B cell (primary cell): ENCODE measurements at regions of chr10 and their contacts with region 1.

Region 1: GRCh38 chr10:96719850-96720421 is 378 bp downstream of the PIK3AP1 start:
- DNase-seq: peak; percentile 88
- ATAC-seq: peak; percentile 63
- H3K4me3 ChIP-seq: peak overlapping the region; percentile 86 to 98 (median 91)
- H3K4me3 Mint-ChIP-seq: peak overlapping the region; percentile 100
- H3K27ac ChIP-seq: peak overlapping the region; percentile 86 to 93
- H3K27ac Mint-ChIP-seq: peak overlapping the region; percentile 99
- H3K4me1 ChIP-seq: peaks cover 49 to 70% of the 10 kb centered on the region in 2 donors
- H3K4me1 Mint-ChIP-seq: peaks cover 70% of the 10 kb centered on the region
- H3K27me3 ChIP-seq: no peaks in the 10 kb centered on the region
- H3K27me3 Mint-ChIP-seq: no peaks in the 10 kb centered on the region
- CTCF ChIP-seq: peak; percentile 77

Region 2: DNA sequence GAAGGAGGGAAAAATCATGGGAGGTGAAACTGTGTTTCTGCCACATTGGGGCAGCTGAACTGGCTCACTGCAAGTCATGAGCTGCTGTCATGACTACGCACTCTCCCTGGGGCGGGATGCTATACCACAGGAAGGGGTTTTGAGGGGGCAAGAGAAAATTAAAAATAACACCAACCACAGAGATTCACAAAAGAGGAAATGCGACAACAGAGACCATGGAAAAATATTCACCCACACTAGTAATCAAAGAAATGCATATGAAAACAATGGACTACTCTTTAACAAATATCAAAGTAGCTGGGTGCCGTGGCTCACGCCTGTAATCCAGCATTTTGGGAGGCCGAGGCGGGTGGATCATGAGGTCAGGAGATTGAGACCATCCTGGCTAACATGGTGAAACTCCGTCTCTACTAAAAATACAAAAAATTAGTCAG is 67.9 kb before region 1 on chr10:
- CTCF ChIA-PET with region 1: interaction called, 22 read pairs
- POLR2A ChIA-PET with region 1: interaction called, 7 read pairs
- intact Hi-C with region 1: loop called (anchors 1 kb)
- DNase-seq: peak; percentile 86
- ATAC-seq: peak; percentile 82
- H3K4me3 ChIP-seq: peak overlapping the region in 1 of 5 experiments; percentile 24
- H3K4me3 Mint-ChIP-seq: peak overlapping the region; percentile 44
- H3K27ac ChIP-seq: peak overlapping the region; percentile 54 to 72
- H3K27ac Mint-ChIP-seq: peak overlapping the region; percentile 86
- H3K4me1 ChIP-seq: peaks cover 49 to 72% of the 10 kb centered on the region in 2 donors
- H3K4me1 Mint-ChIP-seq: peaks cover 79% of the 10 kb centered on the region
- H3K27me3 ChIP-seq: no peaks in the 10 kb centered on the region
- H3K27me3 Mint-ChIP-seq: no peaks in the 10 kb centered on the region
- CTCF ChIP-seq: no peak

Region 3: GRCh38 chr10:96690755-96691731 is 28.9 kb before region 1 on chr10:
- CTCF ChIA-PET with region 1: interaction called, 33 read pairs
- POLR2A ChIA-PET with region 1: interaction called, 4 read pairs
- intact Hi-C with region 1: no loop called
- DNase-seq: no peak
- ATAC-seq: no peak
- H3K4me3 ChIP-seq: no peak overlapping the region
- H3K4me3 Mint-ChIP-seq: peak overlapping the region; percentile 54
- H3K27ac ChIP-seq: peak overlapping the region in 1 of 2 donors; percentile 63
- H3K27ac Mint-ChIP-seq: peak overlapping the region; percentile 88
- H3K4me1 ChIP-seq: peaks cover 86 to 89% of the 10 kb centered on the region in 2 donors
- H3K4me1 Mint-ChIP-seq: peaks cover 90% of the 10 kb centered on the region
- H3K27me3 ChIP-seq: no peaks in the 10 kb centered on the region
- H3K27me3 Mint-ChIP-seq: no peaks in the 10 kb centered on the region
- CTCF ChIP-seq: no peak

Region 4: DNA sequence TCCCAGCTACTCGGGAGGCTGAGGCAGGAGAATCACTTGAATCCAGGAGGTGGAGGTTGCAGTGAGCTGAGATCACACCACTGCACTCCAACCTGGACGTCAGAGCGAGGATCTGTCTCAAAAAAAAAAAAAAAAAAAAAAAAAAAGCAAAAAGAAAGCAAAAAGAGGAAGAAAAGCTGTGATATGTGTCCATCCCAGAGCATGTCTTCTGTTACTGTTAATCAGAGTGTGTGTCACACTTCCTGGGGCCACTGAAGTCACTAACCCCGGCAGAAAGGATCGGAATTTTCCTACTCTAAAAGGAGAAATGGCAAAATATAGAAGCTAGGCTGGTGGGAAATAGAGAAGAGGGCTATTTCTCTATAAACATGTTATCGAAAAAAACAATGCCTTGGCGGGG is 11.5 kb before region 1 on chr10:
- CTCF ChIA-PET with region 1: interaction called, 31 read pairs
- POLR2A ChIA-PET with region 1: interaction called, 7 read pairs
- intact Hi-C with region 1: loop called (anchors 1 kb)
- DNase-seq: peak; percentile 82
- ATAC-seq: peak; percentile 80
- H3K4me3 ChIP-seq: no peak overlapping the region
- H3K4me3 Mint-ChIP-seq: peak overlapping the region; percentile 70
- H3K27ac ChIP-seq: peak overlapping the region; percentile 87 to 92
- H3K27ac Mint-ChIP-seq: peak overlapping the region; percentile 91
- H3K4me1 ChIP-seq: peaks cover 77 to 86% of the 10 kb centered on the region in 2 donors
- H3K4me1 Mint-ChIP-seq: peaks cover 78% of the 10 kb centered on the region
- H3K27me3 ChIP-seq: no peaks in the 10 kb centered on the region
- H3K27me3 Mint-ChIP-seq: no peaks in the 10 kb centered on the region
- CTCF ChIP-seq: no peak

Region 5: DNA sequence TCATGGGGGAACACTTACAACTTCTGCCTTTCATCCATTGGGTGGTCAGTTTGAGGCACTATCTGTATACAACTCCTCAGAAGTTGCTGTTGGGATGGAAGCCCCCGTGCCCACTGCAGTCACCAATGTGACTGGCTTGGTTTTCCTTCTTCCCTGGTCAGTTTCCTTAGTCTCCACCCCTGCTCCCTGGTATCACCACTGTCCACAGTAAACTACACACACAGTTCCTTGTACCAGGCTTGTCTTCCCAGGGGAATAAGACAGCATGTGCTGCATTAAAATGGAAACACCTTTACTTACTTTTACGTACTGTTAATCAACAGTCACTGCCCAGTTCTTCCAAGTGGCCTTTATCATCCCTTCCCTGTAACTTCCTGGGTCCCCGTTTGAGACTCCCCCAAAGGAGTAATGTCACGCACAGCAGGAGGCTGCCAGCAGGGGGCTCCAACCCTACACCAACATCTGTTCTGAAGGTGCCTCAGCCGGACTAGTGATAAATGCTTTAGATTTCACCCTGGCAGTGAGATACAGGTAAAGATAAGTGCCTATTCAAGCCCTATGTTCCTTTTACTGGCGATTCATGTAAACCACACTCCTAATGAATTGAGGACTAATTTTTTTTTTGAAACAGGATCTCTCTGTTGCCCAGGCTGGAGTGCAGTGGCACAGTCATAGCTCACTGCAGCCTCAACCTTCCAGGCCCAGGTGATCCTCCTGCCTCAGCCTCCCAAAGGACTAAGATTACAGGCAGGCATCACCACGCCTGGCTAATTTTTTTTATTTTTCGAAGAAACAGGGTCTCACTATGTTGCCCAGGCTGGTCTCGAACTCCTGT is 45.7 kb after region 1 on chr10:
- CTCF ChIA-PET with region 1: interaction called, 6 read pairs
- POLR2A ChIA-PET with region 1: interaction called, 4 read pairs
- intact Hi-C with region 1: loop called (anchors 1 kb)
- DNase-seq: peak; percentile 83
- ATAC-seq: peak; percentile 74
- H3K4me3 ChIP-seq: no peak overlapping the region
- H3K4me3 Mint-ChIP-seq: peak overlapping the region; percentile 60
- H3K27ac ChIP-seq: peak overlapping the region; percentile 30 to 54
- H3K27ac Mint-ChIP-seq: peak overlapping the region; percentile 77
- H3K4me1 ChIP-seq: peaks cover 33% of the 10 kb centered on the region in 2 donors
- H3K4me1 Mint-ChIP-seq: peaks cover 39% of the 10 kb centered on the region
- H3K27me3 ChIP-seq: no peaks in the 10 kb centered on the region
- H3K27me3 Mint-ChIP-seq: no peaks in the 10 kb centered on the region
- CTCF ChIP-seq: peak; percentile 90